Activated T-helper 2 cell treated with anti-CD3 and anti-CD28 coated beads, Interferon-gamma antibody, Interleukin-2, Interleukin-4, amounts not matched to agents 10 μg/mL and 5 μg/mL and 100 μg/mL, durations not matched to agents 14 hours and 24 hours and 36 hours (primary cell): ENCODE measurements at regions of chr14 and their contacts with region 1.

Region 1: GRCh38 chr14:71331403-71331802 is 424.1 kb downstream of the PCNX1 start:
- DNase-seq: no peak
- H3K4me3 Mint-ChIP-seq: no peak overlapping the region
- H3K27ac Mint-ChIP-seq: peak overlapping the region; percentile 65
- H3K4me1 Mint-ChIP-seq: peaks cover 58% of the 10 kb centered on the region
- H3K27me3 Mint-ChIP-seq: no peaks in the 10 kb centered on the region

Region 2: GRCh38 chr14:71267007-71267513 is 64.3 kb before region 1 on chr14:
- intact Hi-C with region 1: loop called (anchors 2 kb)
- DNase-seq: no peak
- H3K4me3 Mint-ChIP-seq: peak overlapping the region; percentile 41
- H3K27ac Mint-ChIP-seq: peak overlapping the region; percentile 86
- H3K4me1 Mint-ChIP-seq: peaks cover 44% of the 10 kb centered on the region
- H3K27me3 Mint-ChIP-seq: no peaks in the 10 kb centered on the region

Region 3: DNA sequence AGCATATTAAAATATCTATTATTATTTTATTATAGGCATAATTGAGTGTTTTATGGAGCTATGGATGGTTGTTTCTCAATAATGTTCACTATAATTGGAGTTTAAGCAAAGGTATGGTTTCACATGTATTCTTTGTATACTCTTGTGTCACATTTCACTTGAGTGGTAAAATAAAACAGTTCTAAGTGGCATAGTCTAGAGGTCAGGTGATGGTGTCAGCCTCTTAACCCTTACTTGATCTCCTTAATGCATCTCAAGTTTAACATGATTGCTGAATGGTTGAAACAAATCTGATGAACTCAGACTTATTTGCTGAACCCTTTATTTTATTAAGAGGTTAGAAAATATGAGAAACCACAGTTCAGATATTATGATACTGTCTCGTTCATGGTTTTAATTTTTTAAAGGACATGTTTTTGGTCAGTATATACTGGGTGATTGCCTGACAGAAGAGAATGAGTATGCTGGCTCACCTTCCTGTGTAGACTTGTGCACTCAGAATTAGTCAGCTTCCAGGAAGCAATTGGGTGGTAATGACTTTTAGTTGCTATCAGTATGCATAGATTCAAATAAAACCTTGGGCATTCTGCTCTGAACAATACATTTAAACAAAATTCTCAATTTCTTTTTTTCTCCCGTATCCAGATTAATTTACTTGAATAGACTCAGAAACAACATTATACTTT is 40.5 kb after region 1 on chr14:
- intact Hi-C with region 1: loop called (anchors 5 kb)
- DNase-seq: no peak
- H3K4me3 Mint-ChIP-seq: no peak overlapping the region
- H3K27ac Mint-ChIP-seq: peak overlapping the region; percentile 71
- H3K4me1 Mint-ChIP-seq: peaks cover 26% of the 10 kb centered on the region
- H3K27me3 Mint-ChIP-seq: no peaks in the 10 kb centered on the region

Region 4: DNA sequence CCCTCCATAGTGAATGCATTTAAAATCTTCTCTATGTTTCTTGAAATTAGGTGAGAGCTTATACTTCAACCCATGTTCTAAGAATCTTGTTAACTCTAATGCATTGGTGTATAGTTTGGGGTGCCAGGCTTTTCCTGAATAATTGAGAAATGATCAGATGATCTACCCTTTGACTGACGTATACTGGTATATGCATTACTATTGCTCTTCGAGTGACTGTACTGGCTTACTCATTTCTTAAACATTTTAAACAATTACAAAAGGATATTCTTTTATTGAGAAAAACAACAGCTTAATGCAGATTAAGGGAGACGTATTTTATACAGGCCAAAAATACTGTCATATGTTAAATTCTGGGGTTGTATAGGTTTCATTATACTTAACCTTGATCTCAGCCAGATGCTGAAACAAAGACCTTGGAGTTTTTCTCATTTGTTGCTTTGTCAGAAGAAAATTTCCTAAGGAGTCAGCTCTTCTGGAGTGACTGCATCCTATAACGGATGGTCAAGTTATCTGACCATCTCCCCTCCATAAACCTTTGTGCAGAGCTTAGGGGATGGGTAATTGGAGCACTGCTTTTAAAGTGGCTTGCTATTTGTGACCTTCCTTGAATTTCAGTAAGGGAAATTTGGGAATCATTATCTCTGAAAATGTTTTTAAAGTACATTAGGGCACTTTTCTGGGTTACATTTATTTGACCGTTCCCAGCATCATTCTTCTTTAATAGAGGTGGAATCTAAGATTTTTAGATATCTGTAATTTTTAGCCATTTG is 83.4 kb after region 1 on chr14:
- intact Hi-C with region 1: loop called (anchors 1 kb)
- DNase-seq: no peak
- H3K4me3 Mint-ChIP-seq: no peak overlapping the region
- H3K27ac Mint-ChIP-seq: no peak overlapping the region
- H3K4me1 Mint-ChIP-seq: peaks cover 38% of the 10 kb centered on the region
- H3K27me3 Mint-ChIP-seq: no peaks in the 10 kb centered on the region

Region 5: GRCh38 chr14:71472043-71472960 is 140.9 kb after region 1 on chr14:
- intact Hi-C with region 1: loop called (anchors 2 kb)
- DNase-seq: no peak
- H3K4me3 Mint-ChIP-seq: no peak overlapping the region
- H3K27ac Mint-ChIP-seq: peak overlapping the region; percentile 70
- H3K4me1 Mint-ChIP-seq: peaks cover 64% of the 10 kb centered on the region
- H3K27me3 Mint-ChIP-seq: no peaks in the 10 kb centered on the region